ENCODE measurements at regions of chr6 and their contacts with region 1.

Region 1: DNA sequence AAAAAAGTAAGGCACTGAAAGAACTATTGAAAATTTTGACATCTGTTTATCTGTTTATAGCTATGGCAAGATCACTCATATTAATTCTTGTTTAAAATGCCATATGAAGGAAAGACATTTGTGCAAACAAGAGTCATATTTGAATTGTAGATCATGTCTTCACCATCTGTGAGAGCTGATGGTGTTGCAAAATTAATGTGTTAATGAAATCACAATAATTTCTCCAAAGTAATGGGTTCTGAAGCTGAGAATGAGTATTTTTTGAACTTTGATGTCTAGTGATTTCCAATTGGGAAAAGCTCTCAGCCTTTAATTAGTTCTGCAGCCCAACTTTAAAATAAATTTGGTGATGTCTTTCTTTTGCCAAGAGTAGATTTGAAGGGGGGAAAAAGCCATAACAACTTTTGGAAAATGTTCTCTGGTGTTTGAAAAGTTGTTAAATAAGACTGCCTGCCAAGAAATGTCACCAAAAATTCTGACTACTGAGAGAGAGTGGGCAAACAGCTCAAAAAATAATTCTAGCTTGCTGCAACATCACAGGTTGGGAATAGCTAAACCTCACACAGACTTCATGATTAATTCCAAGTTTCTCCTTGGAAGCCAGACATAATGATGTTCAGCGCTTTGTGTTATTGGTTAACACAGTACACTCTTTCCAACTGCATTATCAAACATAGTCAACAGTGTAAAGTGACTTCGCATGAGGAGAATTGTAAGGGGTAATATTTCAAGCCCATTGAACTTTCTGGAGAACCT is 142.6 kb downstream of the SOBP start:
- DNase-seq: no peak
- H3K4me3 ChIP-seq: no peak overlapping the region
- H3K27ac ChIP-seq: no peak overlapping the region
- H3K27me3 ChIP-seq: peaks cover 11% of the 10 kb centered on the region
- CTCF ChIP-seq: no peak

Region 2: GRCh38 chr6:107489636-107490565 is 142.7 kb before region 1 on chr6 and contains the start of gene SOBP:
- CTCF ChIA-PET with region 1: no interaction called
- POLR2A ChIA-PET with region 1: interaction called, 10 read pairs
- DNase-seq: no peak
- H3K4me3 ChIP-seq: peak within 1 kb of the TSS; percentile 76
- H3K27ac ChIP-seq: no peak within 1 kb of the TSS
- H3K27me3 ChIP-seq: peaks cover 19% of the 10 kb centered on the region
- CTCF ChIP-seq: no peak
- polyA plus RNA-seq, gene SOBP: 0.76 and 1.1 TPM in 2 replicates

Region 3: DNA sequence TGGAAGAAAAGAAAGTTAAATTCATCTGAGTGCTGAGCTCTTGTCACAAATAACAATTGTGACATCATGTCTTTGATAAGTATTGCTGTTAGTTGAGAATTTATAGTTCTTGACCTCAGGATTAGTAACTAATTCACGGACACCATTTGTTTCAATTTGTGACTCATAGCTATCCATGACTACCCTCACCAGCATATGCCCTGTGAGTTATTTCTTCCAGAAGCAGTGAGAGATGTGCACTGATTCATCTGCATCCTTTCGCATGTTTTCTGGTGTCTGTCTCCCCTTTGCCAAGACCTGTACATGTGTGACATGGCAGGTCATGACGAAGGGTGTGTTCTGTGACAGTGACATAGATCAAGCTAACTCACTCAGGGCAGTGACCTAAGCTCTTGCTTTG is 55.7 kb before region 1 on chr6:
- CTCF ChIA-PET with region 1: interaction called, 13 read pairs
- POLR2A ChIA-PET with region 1: no interaction called
- DNase-seq: peak; percentile 4
- H3K4me3 ChIP-seq: no peak overlapping the region
- H3K27ac ChIP-seq: no peak overlapping the region
- H3K27me3 ChIP-seq: no peaks in the 10 kb centered on the region
- CTCF ChIP-seq: no peak

Measured in AG04450 (cell line).